ENCODE measurements at regions of chr17 and their contacts with region 1.

Region 1: DNA sequence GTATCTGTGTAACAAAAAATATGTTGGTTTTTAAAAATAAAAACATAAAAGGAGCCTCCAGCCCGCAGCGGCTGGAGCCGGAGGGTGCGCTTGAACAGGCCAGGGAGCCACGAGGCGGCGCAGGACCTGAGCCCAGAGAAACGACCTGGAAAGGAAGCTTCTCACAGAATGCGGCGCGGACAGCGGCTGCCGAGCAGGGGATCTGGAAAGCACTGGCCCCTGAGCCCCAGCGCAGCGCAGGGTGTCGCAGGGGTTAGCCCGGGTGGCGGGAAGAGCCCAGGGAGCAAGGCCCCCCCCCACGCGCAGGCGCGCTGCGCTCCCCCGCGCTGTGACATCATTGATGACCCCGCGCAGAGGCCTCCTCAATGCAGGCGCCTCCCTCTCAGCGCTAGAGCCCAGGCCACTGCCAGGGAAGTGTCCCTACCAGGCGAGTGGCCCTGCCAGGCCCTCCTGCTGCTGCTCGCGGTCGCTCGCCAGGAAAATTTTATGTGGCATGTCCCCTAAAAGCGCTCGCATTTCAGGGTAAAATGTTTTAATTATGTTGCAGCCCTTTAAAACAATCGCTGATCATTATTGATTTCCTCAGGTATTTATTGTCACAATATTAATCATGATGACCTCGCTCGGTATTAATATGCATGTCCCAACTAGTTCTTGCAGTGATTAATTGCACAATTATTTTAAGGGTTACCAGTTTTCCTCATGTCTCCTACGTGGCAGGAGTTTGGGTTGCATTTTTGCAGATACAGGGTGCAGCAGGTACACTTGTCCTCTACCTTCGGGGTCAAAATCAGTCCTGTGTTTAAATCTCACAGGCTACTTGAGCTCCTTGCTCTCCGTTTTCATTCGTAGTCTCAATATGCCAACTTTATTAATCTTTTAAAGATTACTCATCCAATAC is 134.2 kb downstream of the USP22 start:
- DNase-seq: no peak
- H3K4me3 ChIP-seq: peak overlapping the region; percentile 68
- H3K27ac ChIP-seq: peak overlapping the region; percentile 52
- H3K27me3 ChIP-seq: no peaks in the 10 kb centered on the region
- CTCF ChIP-seq: peak; percentile 81

Region 2: GRCh38 chr17:20922128-20922670 is 13.6 kb after region 1 on chr17:
- CTCF ChIA-PET with region 1: interaction called, 15 read pairs
- POLR2A ChIA-PET with region 1: no interaction called
- DNase-seq: no peak
- H3K4me3 ChIP-seq: no peak overlapping the region
- H3K27ac ChIP-seq: peak overlapping the region; percentile 22
- H3K27me3 ChIP-seq: no peaks in the 10 kb centered on the region
- CTCF ChIP-seq: no peak